Caco-2 (cell line): ENCODE measurements at regions of chrX and their contacts with region 1.

Region 1: GRCh38 chrX:64894454-64895038 is 81.7 kb downstream of the ZC4H2 start:
- DNase-seq: peak in 1 of 2 experiments; percentile 47
- H3K4me3 ChIP-seq: no peak overlapping the region
- H3K4me3 Mint-ChIP-seq: no peak overlapping the region
- H3K27ac Mint-ChIP-seq: no peak overlapping the region
- H3K4me1 ChIP-seq: no peaks in the 10 kb centered on the region
- H3K4me1 Mint-ChIP-seq: no peaks in the 10 kb centered on the region
- H3K27me3 ChIP-seq: no peaks in the 10 kb centered on the region
- H3K27me3 Mint-ChIP-seq: no peaks in the 10 kb centered on the region
- CTCF ChIP-seq: peak; percentile 33 to 48

Region 2: GRCh38 chrX:65045001-65045400 is 150.5 kb after region 1 on chrX:
- CTCF ChIA-PET with region 1: no interaction called
- POLR2A ChIA-PET with region 1: no interaction called
- intact Hi-C with region 1: no loop called
- DNase-seq: no peak
- H3K4me3 ChIP-seq: no peak overlapping the region
- H3K4me3 Mint-ChIP-seq: no peak overlapping the region
- H3K27ac Mint-ChIP-seq: no peak overlapping the region
- H3K4me1 ChIP-seq: no peaks in the 10 kb centered on the region
- H3K4me1 Mint-ChIP-seq: no peaks in the 10 kb centered on the region
- H3K27me3 ChIP-seq: no peaks in the 10 kb centered on the region
- H3K27me3 Mint-ChIP-seq: no peaks in the 10 kb centered on the region
- CTCF ChIP-seq: no peak

Region 3: DNA sequence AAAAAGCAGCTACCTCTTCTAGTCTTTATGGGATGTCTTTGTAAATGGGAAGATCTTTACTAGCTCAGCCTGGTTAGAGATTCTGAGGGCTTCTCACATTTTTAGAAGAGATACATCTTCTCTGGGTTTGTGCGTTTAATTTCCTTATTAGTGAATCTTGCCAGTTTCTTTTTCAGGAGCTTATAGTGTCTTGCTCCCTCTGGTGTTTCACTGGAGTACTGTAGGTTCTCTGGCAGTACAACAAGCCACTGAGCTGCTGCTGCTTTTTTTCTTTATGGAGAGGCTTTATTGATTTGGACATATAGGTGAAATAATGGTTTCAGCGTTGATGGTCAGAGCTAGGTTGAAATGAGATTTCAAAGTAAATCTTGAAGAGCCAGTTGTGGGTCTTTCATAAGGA is 557.1 kb after region 1 on chrX:
- CTCF ChIA-PET with region 1: no interaction called
- POLR2A ChIA-PET with region 1: no interaction called
- intact Hi-C with region 1: loop called (anchors 1 kb)
- DNase-seq: peak in 1 of 2 experiments; percentile 24
- H3K4me3 ChIP-seq: no peak overlapping the region
- H3K4me3 Mint-ChIP-seq: no peak overlapping the region
- H3K27ac Mint-ChIP-seq: no peak overlapping the region
- H3K4me1 ChIP-seq: no peaks in the 10 kb centered on the region
- H3K4me1 Mint-ChIP-seq: no peaks in the 10 kb centered on the region
- H3K27me3 ChIP-seq: no peaks in the 10 kb centered on the region
- H3K27me3 Mint-ChIP-seq: no peaks in the 10 kb centered on the region
- CTCF ChIP-seq: peak; percentile 37 to 48

Region 4: GRCh38 chrX:65528705-65529340 is 634.3 kb after region 1 on chrX:
- CTCF ChIA-PET with region 1: no interaction called
- POLR2A ChIA-PET with region 1: no interaction called
- intact Hi-C with region 1: loop called (anchors 1 kb)
- DNase-seq: peak in 1 of 2 experiments; percentile 49
- H3K4me3 ChIP-seq: no peak overlapping the region
- H3K4me3 Mint-ChIP-seq: no peak overlapping the region
- H3K27ac Mint-ChIP-seq: no peak overlapping the region
- H3K4me1 ChIP-seq: no peaks in the 10 kb centered on the region
- H3K4me1 Mint-ChIP-seq: no peaks in the 10 kb centered on the region
- H3K27me3 ChIP-seq: no peaks in the 10 kb centered on the region
- H3K27me3 Mint-ChIP-seq: no peaks in the 10 kb centered on the region
- CTCF ChIP-seq: peak; percentile 81 to 83